Activated naive CD4-positive, alpha-beta T cell treated with anti-CD3 and anti-CD28 coated beads for 36 hours (primary cell): ENCODE measurements at regions of chr20 and their contacts with region 1.

Region 1: DNA sequence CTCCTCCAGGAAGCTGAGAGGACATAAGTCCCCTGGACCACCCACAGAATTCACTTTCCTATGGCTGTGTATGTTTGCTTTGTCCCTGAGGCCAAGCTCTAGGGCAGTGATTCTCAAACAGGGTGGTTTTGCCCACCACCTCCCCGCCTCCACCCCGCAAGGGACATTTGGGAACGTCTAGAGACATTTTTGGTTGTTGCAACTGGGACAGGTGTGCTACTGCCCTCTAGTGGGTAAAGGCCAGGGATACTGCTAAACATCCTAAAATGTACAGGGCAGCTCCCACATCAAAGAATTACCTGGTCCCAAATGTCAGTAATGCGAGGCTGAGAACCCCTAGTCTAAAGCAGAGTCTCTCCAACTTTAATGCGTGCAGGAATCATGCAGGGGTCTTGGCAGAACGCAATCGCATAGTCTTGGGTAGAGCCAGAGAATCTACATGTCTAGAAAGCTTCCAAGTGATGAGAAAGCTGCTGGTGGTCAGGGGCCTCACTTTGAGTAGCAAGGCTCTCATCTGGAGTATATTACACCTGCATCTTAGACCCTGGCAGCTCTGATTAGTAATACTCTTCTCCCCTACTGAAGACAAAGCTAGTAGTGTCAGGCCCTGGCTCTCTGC is 5.1 kb downstream of the KCNS1 start:
- DNase-seq: peak; percentile 83
- H3K4me3 Mint-ChIP-seq: no peak overlapping the region
- H3K27ac Mint-ChIP-seq: no peak overlapping the region
- H3K4me1 Mint-ChIP-seq: peaks cover 10% of the 10 kb centered on the region
- H3K27me3 Mint-ChIP-seq: peaks cover 29% of the 10 kb centered on the region

Region 2: DNA sequence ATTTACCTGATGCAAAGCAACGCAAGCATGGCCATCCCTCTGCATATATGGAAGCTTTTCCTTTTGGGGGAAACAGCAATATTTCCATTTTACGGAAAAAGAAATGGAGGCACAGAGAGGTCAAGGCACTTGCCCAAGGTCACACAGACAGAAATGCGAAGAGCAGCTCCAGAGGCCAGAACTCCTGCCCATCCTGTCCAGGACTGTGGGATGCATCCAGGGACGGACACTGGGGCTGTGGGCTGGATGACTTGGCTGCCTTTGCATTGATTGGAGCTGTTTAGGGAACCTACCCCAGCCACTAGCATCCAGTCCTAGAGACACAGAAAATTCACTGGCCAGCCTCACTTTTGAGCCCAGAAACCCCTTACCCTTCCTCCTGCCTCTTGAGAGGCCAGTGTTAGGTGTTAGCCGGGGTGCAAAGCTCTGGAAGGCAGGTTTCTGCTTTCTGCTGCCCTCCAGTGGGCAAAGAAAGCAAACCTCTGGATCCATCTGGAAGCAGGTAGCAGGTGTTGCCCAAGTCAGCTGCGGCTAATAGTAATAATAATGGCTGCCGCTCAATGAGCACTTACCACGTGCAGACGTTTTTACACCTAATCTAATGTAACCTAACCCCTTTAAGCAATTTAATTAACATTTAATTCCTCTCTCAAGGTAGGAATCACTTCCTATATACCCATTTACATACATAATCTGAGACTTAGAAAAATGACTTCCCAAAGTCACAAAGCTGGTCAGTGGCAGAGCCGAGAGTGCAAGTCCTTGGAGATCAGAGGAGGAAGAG is 412.4 kb before region 1 on chr20:
- CTCF ChIA-PET with region 1: interaction called, 5 read pairs
- intact Hi-C with region 1: loop called (anchors 10 kb)
- DNase-seq: peak; percentile 72
- H3K4me3 Mint-ChIP-seq: no peak overlapping the region
- H3K27ac Mint-ChIP-seq: no peak overlapping the region
- H3K4me1 Mint-ChIP-seq: peaks cover 4% of the 10 kb centered on the region
- H3K27me3 Mint-ChIP-seq: no peaks in the 10 kb centered on the region

Region 3: GRCh38 chr20:44960103-44960852 is 135.6 kb before region 1 on chr20 and contains the start of gene TOMM34:
- CTCF ChIA-PET with region 1: interaction called, 6 read pairs
- intact Hi-C with region 1: loop called (anchors 2 kb)
- DNase-seq: peak; percentile 96
- H3K4me3 Mint-ChIP-seq: peak within 1 kb of the TSS; percentile 93
- H3K27ac Mint-ChIP-seq: peak within 1 kb of the TSS; percentile 97
- H3K4me1 Mint-ChIP-seq: peaks cover 64% of the 10 kb centered on the region
- H3K27me3 Mint-ChIP-seq: no peaks in the 10 kb centered on the region
- total RNA-seq, gene TOMM34: 44.0 to 45.9 TPM

Region 4: GRCh38 chr20:45044084-45044573 is 51.7 kb before region 1 on chr20:
- CTCF ChIA-PET with region 1: interaction called, 60 read pairs
- intact Hi-C with region 1: loop called (anchors 1 kb)
- DNase-seq: peak; percentile 59
- H3K4me3 Mint-ChIP-seq: no peak overlapping the region
- H3K27ac Mint-ChIP-seq: peak overlapping the region; percentile 90
- H3K4me1 Mint-ChIP-seq: peaks cover 76% of the 10 kb centered on the region
- H3K27me3 Mint-ChIP-seq: no peaks in the 10 kb centered on the region

Region 5: GRCh38 chr20:45080867-45081624 is 14.8 kb before region 1 on chr20:
- CTCF ChIA-PET with region 1: interaction called, 17 read pairs
- intact Hi-C with region 1: no loop called
- DNase-seq: no peak
- H3K4me3 Mint-ChIP-seq: no peak overlapping the region
- H3K27ac Mint-ChIP-seq: no peak overlapping the region
- H3K4me1 Mint-ChIP-seq: no peaks in the 10 kb centered on the region
- H3K27me3 Mint-ChIP-seq: no peaks in the 10 kb centered on the region

Region 6: DNA sequence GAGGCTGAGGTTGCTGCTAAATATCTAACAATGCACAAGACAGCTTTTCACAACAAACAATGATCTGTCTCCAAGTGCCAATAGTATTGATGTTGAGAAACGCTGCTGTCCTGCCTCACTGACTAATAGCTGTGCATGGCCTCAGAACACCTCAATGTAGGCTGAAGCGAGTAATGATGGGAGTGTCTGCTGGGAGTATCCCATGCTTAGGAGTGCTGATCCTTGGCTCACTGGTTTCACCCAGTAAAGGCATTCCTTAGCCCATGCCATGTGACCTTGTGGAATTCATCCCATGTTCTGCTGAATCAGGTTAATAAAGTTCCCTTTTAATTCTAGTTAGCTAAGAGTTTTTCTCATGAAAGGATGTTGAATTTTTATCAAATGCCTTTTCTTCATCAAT is 32.2 kb after region 1 on chr20:
- CTCF ChIA-PET with region 1: no interaction called
- intact Hi-C with region 1: no loop called
- DNase-seq: no peak
- H3K4me3 Mint-ChIP-seq: no peak overlapping the region
- H3K27ac Mint-ChIP-seq: no peak overlapping the region
- H3K4me1 Mint-ChIP-seq: no peaks in the 10 kb centered on the region
- H3K27me3 Mint-ChIP-seq: peaks cover 15% of the 10 kb centered on the region

Region 7: GRCh38 chr20:45293041-45294002 is 197.5 kb after region 1 on chr20:
- CTCF ChIA-PET with region 1: interaction called, 55 read pairs
- intact Hi-C with region 1: loop called (anchors 1 kb)
- DNase-seq: peak; percentile 90
- H3K4me3 Mint-ChIP-seq: peak overlapping the region; percentile 72
- H3K27ac Mint-ChIP-seq: no peak overlapping the region
- H3K4me1 Mint-ChIP-seq: peaks cover 4% of the 10 kb centered on the region
- H3K27me3 Mint-ChIP-seq: peaks cover 33% of the 10 kb centered on the region